ENCODE measurements at regions of chr4 and their contacts with region 1.

Region 1: GRCh38 chr4:53228036-53228435 is 137.8 kb downstream of the SCFD2 start:
- DNase-seq: no peak
- H3K4me3 ChIP-seq: no peak overlapping the region
- H3K27ac ChIP-seq: no peak overlapping the region
- H3K4me1 ChIP-seq: no peaks in the 10 kb centered on the region
- H3K27me3 ChIP-seq: no peaks in the 10 kb centered on the region
- CTCF ChIP-seq: no peak
- POLR2A ChIP-seq: no peak

Region 2: DNA sequence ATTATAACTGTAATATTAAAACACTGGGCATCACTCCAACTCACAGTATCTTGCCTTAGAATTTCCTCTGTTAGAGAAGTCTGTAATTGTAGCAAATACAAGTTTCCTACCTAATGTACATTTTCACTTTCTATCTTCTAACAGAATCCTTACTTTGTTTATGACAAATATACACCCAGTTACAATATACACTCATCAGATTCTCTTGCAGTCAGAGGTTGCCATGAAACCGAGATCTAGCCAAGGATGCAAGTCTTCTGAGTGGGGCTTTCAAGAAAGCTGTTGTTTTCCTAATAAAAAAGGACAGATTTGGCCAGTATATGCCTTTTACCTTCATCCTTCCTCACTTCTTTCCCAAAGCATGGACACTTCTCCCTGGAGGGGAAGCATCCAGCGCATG is 91.1 kb before region 1 on chr4:
- intact Hi-C with region 1: loop called (anchors 5 kb)
- DNase-seq: no peak
- H3K4me3 ChIP-seq: no peak overlapping the region
- H3K27ac ChIP-seq: no peak overlapping the region
- H3K4me1 ChIP-seq: no peaks in the 10 kb centered on the region
- H3K27me3 ChIP-seq: no peaks in the 10 kb centered on the region
- CTCF ChIP-seq: no peak
- POLR2A ChIP-seq: no peak

Region 3: DNA sequence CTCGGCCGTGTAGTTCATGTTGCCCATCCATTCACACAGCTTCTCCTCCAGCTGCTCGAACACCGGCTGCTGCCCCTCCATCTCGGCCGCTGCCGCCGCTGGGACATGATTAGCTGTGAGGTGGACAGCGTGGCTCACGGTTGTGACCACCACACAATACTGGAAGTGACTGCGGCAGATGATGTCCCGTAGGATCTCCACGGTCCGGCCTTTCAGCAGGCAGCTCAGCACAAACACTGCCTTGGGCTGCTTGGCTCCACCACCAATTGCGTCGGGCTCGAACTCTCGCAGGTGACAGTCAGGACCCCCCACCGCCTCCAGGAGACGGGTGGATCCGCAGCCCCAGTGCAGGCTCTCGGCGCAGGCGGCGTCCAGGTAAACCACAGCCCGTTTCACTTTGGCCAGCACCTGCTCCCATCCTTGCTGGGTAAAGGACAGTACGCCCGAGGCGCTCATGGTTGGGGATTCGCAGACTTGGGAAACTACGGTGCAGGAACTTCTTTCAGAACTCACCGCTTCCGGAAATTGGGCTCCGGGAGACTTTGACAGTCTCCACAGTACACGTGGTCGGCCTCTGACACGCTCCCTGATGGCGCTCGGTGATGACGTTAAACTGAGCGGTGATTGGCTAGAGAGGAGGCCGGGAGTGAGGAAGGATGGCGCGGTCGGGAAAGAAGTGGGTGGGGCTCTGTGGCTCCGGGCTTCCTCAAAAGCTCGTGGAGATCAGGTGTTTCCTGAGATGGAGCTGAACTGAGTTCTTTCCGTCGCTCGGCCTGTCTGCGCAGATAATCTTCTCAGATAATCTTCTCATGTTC is 137.7 kb after region 1 on chr4 and contains the start of gene SCFD2:
- intact Hi-C with region 1: no loop called
- DNase-seq: peak; percentile 97 to 98
- H3K4me3 ChIP-seq: peak within 1 kb of the TSS; percentile 65 to 91 (median 87)
- H3K27ac ChIP-seq: peak within 1 kb of the TSS; percentile 50 to 68
- H3K4me1 ChIP-seq: peaks cover 0 to 9% of the 10 kb centered on the region in 2 donors
- H3K27me3 ChIP-seq: no peaks in the 10 kb centered on the region
- CTCF ChIP-seq: no peak
- POLR2A ChIP-seq: no peak
- total RNA-seq, gene SCFD2: 22.8 to 33.8 (median 25.0) TPM